Ovary (tissue), 10 donors: ENCODE measurements at regions of chr12 and their contacts with region 1.

Region 1: GRCh38 chr12:54379401-54380201 is 4.9 kb downstream of the ZNF385A start:
- DNase-seq: peak; percentile 90 to 95 (median 93)
- H3K4me3 ChIP-seq: peak overlapping the region; percentile 37
- H3K27ac ChIP-seq: no peak overlapping the region
- H3K4me1 ChIP-seq: peaks cover 3% of the 10 kb centered on the region
- H3K27me3 ChIP-seq: no peaks in the 10 kb centered on the region
- CTCF ChIP-seq: peak; percentile 99 to 100 (median 100)
- EP300 ChIP-seq: no peak
- POLR2A ChIP-seq: no peak

Region 2: DNA sequence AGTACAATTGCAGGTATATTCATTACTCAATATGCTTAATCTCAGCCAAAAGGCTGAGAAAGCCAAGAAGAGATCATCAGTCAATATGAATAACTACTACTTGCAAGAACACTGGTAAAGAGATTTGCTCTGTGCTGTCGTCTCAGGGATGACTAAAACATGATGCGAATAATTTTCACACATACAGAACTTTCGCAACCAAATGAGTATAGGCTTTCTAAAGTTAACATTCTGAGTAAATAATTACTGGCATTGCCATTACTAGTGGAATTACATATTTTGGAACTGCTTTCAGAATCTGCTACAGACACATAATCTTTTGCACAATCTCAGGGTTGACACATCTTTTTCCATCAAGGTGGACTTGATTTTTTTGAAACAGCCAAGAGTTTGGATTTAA is 142.6 kb after region 1 on chr12:
- intact Hi-C with region 1: loop called in 1 of 4 experiments (anchors 5 kb)
- DNase-seq: no peak
- H3K4me3 ChIP-seq: no peak overlapping the region
- H3K27ac ChIP-seq: no peak overlapping the region
- H3K4me1 ChIP-seq: no peaks in the 10 kb centered on the region
- H3K27me3 ChIP-seq: no peaks in the 10 kb centered on the region
- CTCF ChIP-seq: no peak
- EP300 ChIP-seq: no peak
- POLR2A ChIP-seq: no peak

Region 3: DNA sequence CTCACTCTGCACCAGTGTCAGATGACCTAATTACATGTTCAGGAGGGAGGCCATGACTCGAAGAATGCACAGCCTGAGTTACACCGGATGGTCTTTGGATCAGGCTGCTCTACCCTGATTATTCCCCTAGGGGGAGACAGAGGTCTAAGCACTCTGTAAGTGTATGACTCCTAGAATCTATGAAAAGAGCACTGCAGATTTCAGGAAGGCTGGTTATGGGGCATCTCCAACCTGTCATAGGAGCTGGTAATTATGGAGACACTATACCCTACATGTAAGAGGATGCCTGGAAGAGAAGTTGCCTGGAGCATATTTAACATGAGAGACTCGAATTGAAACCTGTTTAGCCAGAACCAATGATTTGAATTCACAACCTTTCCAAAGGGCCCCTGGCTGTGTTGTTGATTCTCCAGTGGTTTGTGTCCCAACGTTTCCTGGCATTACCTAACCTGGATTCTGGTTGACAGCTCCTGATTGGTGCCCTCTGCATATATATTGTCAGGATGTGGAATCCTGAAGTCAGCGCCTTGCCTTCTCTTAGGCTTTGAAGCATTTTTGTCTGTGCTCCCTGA is 474.5 kb after region 1 on chr12 and contains the start of gene MUCL1:
- intact Hi-C with region 1: no loop called
- DNase-seq: no peak
- H3K4me3 ChIP-seq: no peak within 1 kb of the TSS
- H3K27ac ChIP-seq: no peak within 1 kb of the TSS
- H3K4me1 ChIP-seq: no peaks in the 10 kb centered on the region
- H3K27me3 ChIP-seq: no peaks in the 10 kb centered on the region
- CTCF ChIP-seq: no peak
- EP300 ChIP-seq: no peak
- POLR2A ChIP-seq: no peak
- total RNA-seq, gene MUCL1: 0.75 to 1.1 (median 0.81) TPM in 3 of 7 donors, not detected in the others